ENCODE measurements at regions of chr9 and their contacts with region 1.

Region 1: GRCh38 chr9:133874056-133874642 is 118.0 kb downstream of the VAV2 start:
- DNase-seq: no peak
- ATAC-seq: no peak
- H3K4me3 ChIP-seq: no peak overlapping the region
- H3K27ac ChIP-seq: no peak overlapping the region
- H3K4me1 ChIP-seq: peaks cover 0 to 20% (median 0%) of the 10 kb centered on the region in 12 donors
- H3K27me3 ChIP-seq: no peaks in the 10 kb centered on the region
- CTCF ChIP-seq: no peak
- POLR2A ChIP-seq: no peak

Region 2: GRCh38 chr9:133726401-133727276 is 147.5 kb before region 1 on chr9:
- intact Hi-C with region 1: no loop called
- DNase-seq: peak; percentile 49 to 76 (median 56)
- ATAC-seq: peak; percentile 44 to 86 (median 76)
- H3K4me3 ChIP-seq: no peak overlapping the region
- H3K27ac ChIP-seq: no peak overlapping the region
- H3K4me1 ChIP-seq: no peaks in the 10 kb centered on the region
- H3K27me3 ChIP-seq: peaks cover 0 to 20% (median 4%) of the 10 kb centered on the region in 9 donors
- CTCF ChIP-seq: peak; percentile 49 to 74 (median 64)
- POLR2A ChIP-seq: no peak

Region 3: GRCh38 chr9:133839822-133840329 is 34.3 kb before region 1 on chr9:
- intact Hi-C with region 1: loop called in 1 of 10 experiments (anchors 2 kb)
- DNase-seq: peak in 4 of 5 donors; percentile 37 to 62 (median 50)
- ATAC-seq: peak in 3 of 4 donors; percentile 47 to 68 (median 51)
- H3K4me3 ChIP-seq: no peak overlapping the region
- H3K27ac ChIP-seq: peak overlapping the region in 6 of 12 donors; percentile 12 to 63 (median 24)
- H3K4me1 ChIP-seq: peaks cover 0 to 34% (median 20%) of the 10 kb centered on the region in 12 donors
- H3K27me3 ChIP-seq: no peaks in the 10 kb centered on the region
- CTCF ChIP-seq: no peak
- POLR2A ChIP-seq: no peak